ENCODE measurements at regions of chr16 and their contacts with region 1.

Region 1: DNA sequence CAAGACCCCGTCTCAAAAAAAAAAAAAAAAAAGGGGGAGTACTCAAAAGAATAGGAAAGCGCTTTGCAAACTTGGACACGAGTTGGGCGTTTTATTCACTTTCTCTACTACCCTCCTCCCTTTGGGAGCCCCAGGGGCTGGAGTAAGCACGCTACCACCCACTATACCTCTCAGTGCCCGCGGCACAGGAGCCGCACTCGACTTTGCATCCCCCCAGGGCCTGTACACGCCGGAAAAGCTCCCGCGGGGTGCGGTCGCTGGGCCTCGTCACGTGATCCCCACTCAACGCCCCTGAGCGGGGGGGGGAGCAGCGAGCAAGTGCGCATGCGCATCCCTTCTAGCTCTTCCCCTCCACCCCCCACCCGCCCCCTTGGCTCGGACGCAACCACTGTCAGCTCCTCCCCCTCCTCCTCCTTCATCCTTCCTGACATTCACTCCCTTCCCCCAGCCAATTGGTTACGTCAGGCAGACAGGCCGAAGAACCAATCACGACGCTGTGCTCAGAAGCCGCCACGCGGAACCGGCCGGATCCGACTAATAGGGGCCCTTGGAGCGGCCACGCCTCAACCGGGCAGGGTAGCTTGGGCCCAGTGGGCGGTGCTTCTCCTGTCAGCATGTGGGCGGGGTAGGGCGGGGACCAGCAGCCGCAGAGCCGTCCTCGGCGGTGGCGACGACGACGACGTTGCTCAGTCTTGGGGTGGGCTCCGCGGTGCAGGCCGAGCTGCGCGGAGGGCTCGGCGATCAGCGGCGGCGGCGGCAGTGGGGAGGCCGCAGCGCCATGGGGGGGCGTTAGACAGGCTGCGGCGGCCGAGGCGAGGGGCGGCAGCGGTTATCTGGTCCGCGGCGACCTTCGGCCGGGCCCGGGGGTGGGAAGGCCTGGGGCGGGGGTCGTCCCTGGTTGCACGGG is at the start of gene HAPSTR1:
- DNase-seq: peak; percentile 99 to 100
- H3K4me3 ChIP-seq: peak within 1 kb of the TSS; percentile 83 to 98
- H3K27ac ChIP-seq: peak within 1 kb of the TSS; percentile 96 to 98
- H3K4me1 ChIP-seq: peaks cover 6 to 25% of the 10 kb centered on the region in 2 donors
- H3K27me3 ChIP-seq: no peaks in the 10 kb centered on the region
- CTCF ChIP-seq: no peak
- total RNA-seq, gene HAPSTR1: 22.0 TPM

Region 2: DNA sequence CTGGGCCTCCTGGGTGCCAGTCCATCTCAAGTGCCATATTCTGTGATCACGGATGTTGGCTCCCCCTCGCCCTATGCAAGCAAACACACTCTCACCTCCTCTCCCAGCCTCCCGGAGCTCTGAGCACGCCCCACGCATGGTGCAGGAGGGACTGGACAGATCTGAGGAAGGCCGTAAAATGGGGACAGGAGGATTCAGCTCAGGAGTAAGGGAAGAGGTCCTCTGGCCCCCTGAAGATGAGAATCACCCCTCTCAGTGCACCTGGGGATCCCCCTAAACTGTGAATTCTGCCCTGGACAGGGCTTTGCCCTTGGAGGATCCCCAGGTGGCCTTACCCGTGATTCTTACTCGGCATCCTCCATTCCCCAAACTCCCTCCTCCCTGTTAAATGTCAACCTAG is 309.4 kb before region 1 on chr16:
- intact Hi-C with region 1: no loop called
- DNase-seq: no peak
- H3K4me3 ChIP-seq: no peak overlapping the region
- H3K27ac ChIP-seq: no peak overlapping the region
- H3K4me1 ChIP-seq: no peaks in the 10 kb centered on the region
- H3K27me3 ChIP-seq: no peaks in the 10 kb centered on the region
- CTCF ChIP-seq: no peak

Region 3: GRCh38 chr16:8868416-8869211 is 222.6 kb before region 1 on chr16 and contains the start of gene CARHSP1:
- intact Hi-C with region 1: loop called (anchors 2 kb)
- DNase-seq: peak; percentile 61 to 91
- H3K4me3 ChIP-seq: peak within 1 kb of the TSS; percentile 80 to 92
- H3K27ac ChIP-seq: peak within 1 kb of the TSS; percentile 55 to 91
- H3K4me1 ChIP-seq: peaks cover 11 to 46% of the 10 kb centered on the region in 2 donors
- H3K27me3 ChIP-seq: no peaks in the 10 kb centered on the region
- CTCF ChIP-seq: no peak
- total RNA-seq, gene CARHSP1: 151 TPM

Region 4: GRCh38 chr16:8972843-8973586 is 118.2 kb before region 1 on chr16:
- intact Hi-C with region 1: no loop called
- DNase-seq: no peak
- H3K4me3 ChIP-seq: no peak overlapping the region
- H3K27ac ChIP-seq: no peak overlapping the region
- H3K4me1 ChIP-seq: no peaks in the 10 kb centered on the region
- H3K27me3 ChIP-seq: no peaks in the 10 kb centered on the region
- CTCF ChIP-seq: no peak

Region 5: DNA sequence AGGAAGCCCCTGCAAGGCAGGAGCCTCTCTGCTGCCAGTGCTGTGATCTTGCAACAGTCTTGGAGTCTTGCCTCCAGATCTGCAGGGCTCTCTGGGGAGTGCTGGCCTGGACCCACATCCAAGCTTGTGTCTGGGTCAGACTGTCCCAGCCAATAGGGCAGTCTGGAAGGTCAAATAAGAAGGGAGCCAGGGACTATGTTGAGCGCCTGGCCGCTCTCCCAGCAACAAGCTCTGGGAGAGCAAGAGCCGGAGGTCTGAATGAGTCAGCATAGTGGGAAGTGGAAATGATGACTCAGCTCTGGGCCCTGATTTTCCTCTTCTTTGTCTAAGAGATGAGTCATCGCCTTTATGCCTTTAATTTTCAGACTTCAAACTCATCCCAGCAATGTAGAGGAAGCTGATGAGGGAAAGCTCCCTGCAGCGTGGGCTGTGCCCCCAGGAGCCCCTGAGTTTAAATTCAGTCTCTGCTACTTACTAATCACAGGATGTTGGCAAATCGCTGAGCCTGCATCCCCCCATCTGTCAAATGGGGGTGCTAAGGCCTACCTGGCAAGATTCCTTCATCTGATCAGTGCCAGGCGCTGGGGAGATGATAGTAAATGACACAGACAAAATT is 43.4 kb before region 1 on chr16:
- intact Hi-C with region 1: loop called (anchors 2 kb)
- DNase-seq: peak; percentile 93 to 97
- H3K4me3 ChIP-seq: no peak overlapping the region
- H3K27ac ChIP-seq: peak overlapping the region; percentile 77 to 80
- H3K4me1 ChIP-seq: peaks cover 3 to 11% of the 10 kb centered on the region in 2 donors
- H3K27me3 ChIP-seq: no peaks in the 10 kb centered on the region
- CTCF ChIP-seq: no peak

Region 6: GRCh38 chr16:9072806-9073341 is 18.3 kb before region 1 on chr16:
- intact Hi-C with region 1: no loop called
- DNase-seq: no peak
- H3K4me3 ChIP-seq: no peak overlapping the region
- H3K27ac ChIP-seq: no peak overlapping the region
- H3K4me1 ChIP-seq: no peaks in the 10 kb centered on the region
- H3K27me3 ChIP-seq: no peaks in the 10 kb centered on the region
- CTCF ChIP-seq: no peak

Region 7: GRCh38 chr16:10579965-10580882 is 1489.0 kb after region 1 on chr16 and contains the start of gene EMP2:
- intact Hi-C with region 1: loop called (anchors 5 kb)
- DNase-seq: peak; percentile 43 to 90
- H3K4me3 ChIP-seq: peak within 1 kb of the TSS; percentile 72 to 90
- H3K27ac ChIP-seq: peak within 1 kb of the TSS; percentile 87 to 97
- H3K4me1 ChIP-seq: peaks cover 6 to 42% of the 10 kb centered on the region in 2 donors
- H3K27me3 ChIP-seq: no peaks in the 10 kb centered on the region
- CTCF ChIP-seq: peak; percentile 45 to 72 (median 54)
- total RNA-seq, gene EMP2: 49.2 TPM

Region 8: DNA sequence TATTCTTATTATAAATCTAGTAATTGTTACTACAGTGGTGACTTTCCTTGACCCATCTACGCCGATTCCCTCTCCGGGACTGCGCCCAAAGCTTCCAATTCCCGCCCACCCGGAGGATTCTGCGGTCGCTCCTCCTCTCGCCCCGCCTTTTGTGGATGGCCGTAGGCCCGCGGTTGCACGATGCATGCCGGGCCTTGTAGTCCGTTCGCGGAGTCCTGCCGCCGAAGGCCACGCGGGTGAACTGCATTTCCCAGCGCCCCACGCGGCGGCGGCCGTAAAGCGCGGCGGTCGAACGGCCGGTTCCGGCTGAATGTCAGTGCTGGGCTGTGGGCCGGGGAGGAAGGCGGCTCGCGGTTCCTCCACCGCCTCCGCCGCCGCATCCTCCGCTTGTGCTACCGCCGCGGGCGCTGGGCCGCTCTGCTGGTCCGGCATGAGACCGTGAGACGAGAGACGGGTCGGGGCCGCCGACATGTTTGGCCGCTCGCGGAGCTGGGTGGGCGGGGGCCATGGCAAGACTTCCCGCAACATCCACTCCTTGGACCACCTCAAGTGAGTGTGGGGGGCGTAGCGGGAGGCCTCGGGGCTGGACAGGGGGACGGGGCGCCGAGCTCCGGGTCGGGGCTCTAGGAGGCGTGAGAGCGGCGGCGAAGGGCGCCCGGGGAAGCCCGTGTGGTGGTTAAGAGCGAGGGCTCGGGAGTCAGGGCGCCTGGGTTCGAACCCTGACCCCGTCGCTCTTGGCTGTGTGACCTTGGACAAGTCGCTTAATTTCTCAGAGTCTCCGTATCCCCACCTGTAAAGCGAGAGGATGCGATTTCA is 1853.2 kb after region 1 on chr16 and contains the start of gene CLEC16A:
- intact Hi-C with region 1: loop called (anchors 10 kb)
- DNase-seq: peak; percentile 93 to 99
- H3K4me3 ChIP-seq: peak within 1 kb of the TSS; percentile 98
- H3K27ac ChIP-seq: peak within 1 kb of the TSS; percentile 85 to 86
- H3K4me1 ChIP-seq: peaks cover 20 to 49% of the 10 kb centered on the region in 2 donors
- H3K27me3 ChIP-seq: no peaks in the 10 kb centered on the region
- CTCF ChIP-seq: no peak
- total RNA-seq, gene CLEC16A: 16.2 TPM

Measured in ascending aorta (tissue), 2 donors.